ENCODE measurements at regions of chr3 and their contacts with region 1.

Region 1: DNA sequence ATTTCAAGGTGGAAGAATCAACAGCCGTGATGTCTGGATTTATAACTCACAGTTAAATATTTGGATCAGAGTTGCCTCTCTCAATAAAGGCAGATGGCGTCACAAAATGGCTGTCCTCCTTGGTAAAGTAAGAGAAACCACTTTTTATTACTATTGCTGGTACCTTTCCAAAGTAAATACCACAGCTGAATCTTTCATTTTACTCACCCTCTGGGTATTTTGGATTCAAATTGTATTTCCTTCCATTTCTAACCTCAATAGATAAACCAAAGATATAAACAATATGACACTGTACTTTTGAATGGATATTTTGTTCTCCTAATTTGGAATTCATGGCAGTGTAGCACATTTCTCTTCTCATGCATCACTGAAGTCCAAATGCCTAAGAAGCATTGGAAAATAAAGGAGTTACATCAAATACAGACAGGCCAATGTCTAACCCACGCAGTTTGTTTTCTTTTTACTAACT is 29.5 kb downstream of the KLHL24 start:
- DNase-seq: no peak
- H3K4me3 ChIP-seq: no peak overlapping the region
- H3K4me3 Mint-ChIP-seq: no peak overlapping the region
- H3K27ac ChIP-seq: no peak overlapping the region
- H3K27ac Mint-ChIP-seq: no peak overlapping the region
- H3K4me1 ChIP-seq: no peaks in the 10 kb centered on the region
- H3K4me1 Mint-ChIP-seq: peaks cover 7 to 16% (median 12%) of the 10 kb centered on the region in 4 donors
- H3K27me3 ChIP-seq: no peaks in the 10 kb centered on the region
- H3K27me3 Mint-ChIP-seq: no peaks in the 10 kb centered on the region

Region 2: GRCh38 chr3:183460081-183461055 is 204.6 kb before region 1 on chr3:
- CTCF ChIA-PET with region 1: no interaction called
- POLR2A ChIA-PET with region 1: no interaction called
- intact Hi-C with region 1: loop called (anchors 10 kb)
- DNase-seq: no peak
- H3K4me3 ChIP-seq: no peak overlapping the region
- H3K4me3 Mint-ChIP-seq: no peak overlapping the region
- H3K27ac ChIP-seq: no peak overlapping the region
- H3K27ac Mint-ChIP-seq: no peak overlapping the region
- H3K4me1 ChIP-seq: no peaks in the 10 kb centered on the region
- H3K4me1 Mint-ChIP-seq: no peaks in the 10 kb centered on the region
- H3K27me3 ChIP-seq: no peaks in the 10 kb centered on the region
- H3K27me3 Mint-ChIP-seq: peaks cover 0 to 1% of the 10 kb centered on the region in 2 donors